ENCODE measurements at regions of chr2 and their contacts with region 1.

Region 1: DNA sequence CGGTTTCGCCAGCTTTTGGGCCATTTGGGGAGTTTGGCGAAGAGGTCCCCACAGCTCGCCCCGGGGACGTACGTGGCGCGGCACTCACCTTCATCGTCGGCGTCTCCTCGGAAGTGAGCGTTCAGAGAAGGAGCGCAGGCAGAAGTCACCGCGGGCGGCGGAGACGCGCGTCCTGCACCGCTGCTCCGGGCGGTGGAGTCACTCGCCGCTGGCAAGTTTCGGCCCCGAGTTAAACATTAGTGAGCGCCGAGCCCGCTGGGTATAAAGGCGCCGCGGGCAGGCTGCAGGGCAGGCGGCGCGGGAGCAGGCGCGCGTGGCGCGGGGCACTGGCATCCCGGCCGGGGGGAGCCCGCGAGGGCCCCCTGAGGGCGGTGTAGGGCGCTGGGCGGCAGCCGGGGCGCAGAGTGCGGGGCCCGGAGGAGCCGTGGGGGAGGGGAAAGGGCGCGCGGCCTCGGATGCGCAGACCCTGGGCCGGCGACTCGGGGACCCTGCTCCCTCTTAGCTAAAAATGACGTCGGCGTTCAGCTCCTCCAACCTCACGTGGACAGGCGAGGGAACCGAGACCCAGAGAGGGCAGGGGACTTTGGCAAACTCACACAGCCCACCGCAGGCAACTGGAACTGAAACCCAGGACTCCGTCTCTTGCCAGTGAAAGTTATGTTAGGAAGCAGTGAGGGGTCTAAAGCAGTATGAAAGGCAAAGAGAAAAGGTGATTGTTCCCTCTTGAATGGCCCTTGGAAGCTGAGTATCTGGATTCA is at the start of gene DPP4:
- DNase-seq: no peak
- ATAC-seq: peak; percentile 90
- H3K4me3 ChIP-seq: peak within 1 kb of the TSS; percentile 91
- H3K27ac ChIP-seq: peak within 1 kb of the TSS; percentile 28
- H3K4me1 ChIP-seq: peaks cover 6% of the 10 kb centered on the region; the same call in 1 of the 2 replicates
- H3K27me3 ChIP-seq: no peaks in the 10 kb centered on the region
- CTCF ChIP-seq: 0 out of 6 replicates have a peak, but pooled peaks of 1 of the 3 experiments have one; percentile 4
- EP300 ChIP-seq: peak in 1 of 2 experiments; percentile 14; a peak in 1 of 4 replicates
- POLR2A ChIP-seq: peak; percentile 75
- RAD21 ChIP-seq: no peak
- polyA plus RNA-seq, gene DPP4: 4.1 to 4.8 TPM

Region 2: DNA sequence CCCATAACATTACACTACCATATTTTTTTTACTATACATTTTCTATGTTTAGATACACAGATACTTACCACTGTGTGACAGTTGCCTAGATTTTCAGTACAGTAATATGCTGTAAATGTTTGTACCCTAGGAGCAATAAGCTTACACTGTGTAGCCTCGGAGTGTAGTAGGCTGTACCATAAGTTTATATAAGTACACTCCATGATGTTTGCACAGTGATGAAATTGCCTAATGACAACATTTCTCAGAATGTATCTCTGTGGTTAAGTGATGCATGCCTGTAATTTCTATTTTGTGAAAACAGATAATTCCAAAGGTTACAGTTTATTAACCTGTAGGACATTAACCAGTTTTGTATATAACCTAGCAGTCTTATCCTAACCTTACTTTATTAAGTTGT is 1452.3 kb before region 1 on chr2:
- CTCF ChIA-PET with region 1: no interaction called
- POLR2A ChIA-PET with region 1: no interaction called
- RAD21 ChIA-PET with region 1: no interaction called
- SMC1A ChIA-PET with region 1: no interaction called
- in situ Hi-C with region 1: no loop called
- intact Hi-C with region 1: no loop called
- DNase-seq: no peak
- ATAC-seq: no peak
- H3K4me3 ChIP-seq: no peak overlapping the region
- H3K27ac ChIP-seq: no peak overlapping the region
- H3K4me1 ChIP-seq: no peaks in the 10 kb centered on the region
- H3K27me3 ChIP-seq: no peaks in the 10 kb centered on the region
- CTCF ChIP-seq: no peak
- EP300 ChIP-seq: no peak
- POLR2A ChIP-seq: no peak
- RAD21 ChIP-seq: no peak

Region 3: GRCh38 chr2:161830964-161831363 is 243.1 kb before region 1 on chr2:
- CTCF ChIA-PET with region 1: no interaction called
- POLR2A ChIA-PET with region 1: no interaction called
- RAD21 ChIA-PET with region 1: no interaction called
- SMC1A ChIA-PET with region 1: no interaction called
- in situ Hi-C with region 1: no loop called
- intact Hi-C with region 1: no loop called
- DNase-seq: no peak
- ATAC-seq: no peak
- H3K4me3 ChIP-seq: no peak overlapping the region
- H3K27ac ChIP-seq: no peak overlapping the region
- H3K4me1 ChIP-seq: no peaks in the 10 kb centered on the region
- H3K27me3 ChIP-seq: no peaks in the 10 kb centered on the region
- CTCF ChIP-seq: no peak
- EP300 ChIP-seq: no peak
- POLR2A ChIP-seq: no peak
- RAD21 ChIP-seq: no peak

Region 4: DNA sequence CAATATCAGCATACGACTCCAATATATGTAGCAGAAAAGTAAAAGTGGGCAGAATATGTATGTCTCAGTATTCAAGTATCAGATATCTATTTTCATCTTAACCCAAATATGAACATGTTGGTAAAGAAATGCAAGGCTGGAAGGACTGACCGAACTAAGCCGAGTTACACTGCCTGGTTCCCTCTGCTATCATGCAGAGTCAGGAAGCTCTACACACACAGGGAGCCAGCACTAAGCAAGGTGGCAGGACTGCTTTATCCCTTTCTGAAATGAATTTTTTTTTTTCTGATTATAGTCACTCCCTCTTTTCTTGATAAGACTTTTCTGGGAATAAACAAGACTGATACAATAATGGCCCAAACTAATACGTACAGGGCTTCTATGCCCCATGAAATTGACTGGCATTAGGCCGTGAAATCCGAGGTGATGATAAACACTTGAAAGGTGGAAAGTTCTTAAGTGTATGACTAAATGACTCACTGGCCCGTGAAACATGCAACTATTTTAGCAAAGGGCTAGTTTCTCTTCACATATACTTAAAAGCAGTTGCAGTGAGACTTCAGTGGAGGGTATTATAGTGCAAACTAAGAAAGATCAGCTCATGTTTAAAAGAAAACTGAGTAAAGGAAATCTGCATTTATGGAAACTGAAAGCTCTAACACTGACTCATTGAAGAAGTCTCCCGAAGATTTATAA is 14.9 kb before region 1 on chr2:
- CTCF ChIA-PET with region 1: interaction called, 26 read pairs
- POLR2A ChIA-PET with region 1: interaction called, 98 read pairs
- RAD21 ChIA-PET with region 1: interaction called, 46 read pairs
- SMC1A ChIA-PET with region 1: interaction called, 152 read pairs
- in situ Hi-C with region 1: no loop called
- intact Hi-C with region 1: loop called (anchors 2 kb)
- DNase-seq: peak; percentile 84
- ATAC-seq: peak; percentile 82
- H3K4me3 ChIP-seq: peak overlapping the region; percentile 8; the same call in 1 of the 2 replicates
- H3K27ac ChIP-seq: peak overlapping the region; percentile 78
- H3K4me1 ChIP-seq: peaks cover 57% of the 10 kb centered on the region
- H3K27me3 ChIP-seq: no peaks in the 10 kb centered on the region
- CTCF ChIP-seq: no peak
- EP300 ChIP-seq: peak; percentile 37 to 79; a peak in 2 of 4 replicates
- POLR2A ChIP-seq: no peak
- RAD21 ChIP-seq: no peak

Region 5: GRCh38 chr2:162118559-162119031 is 44.5 kb after region 1 on chr2:
- CTCF ChIA-PET with region 1: interaction called, 5 read pairs
- POLR2A ChIA-PET with region 1: no interaction called
- RAD21 ChIA-PET with region 1: interaction called, 4 read pairs
- SMC1A ChIA-PET with region 1: interaction called, 4 read pairs
- in situ Hi-C with region 1: no loop called
- intact Hi-C with region 1: loop called (anchors 2 kb)
- DNase-seq: no peak
- ATAC-seq: no peak
- H3K4me3 ChIP-seq: no peak overlapping the region
- H3K27ac ChIP-seq: no peak overlapping the region
- H3K4me1 ChIP-seq: no peaks in the 10 kb centered on the region
- H3K27me3 ChIP-seq: no peaks in the 10 kb centered on the region
- CTCF ChIP-seq: no peak
- EP300 ChIP-seq: no peak
- POLR2A ChIP-seq: no peak
- RAD21 ChIP-seq: no peak

Region 6: DNA sequence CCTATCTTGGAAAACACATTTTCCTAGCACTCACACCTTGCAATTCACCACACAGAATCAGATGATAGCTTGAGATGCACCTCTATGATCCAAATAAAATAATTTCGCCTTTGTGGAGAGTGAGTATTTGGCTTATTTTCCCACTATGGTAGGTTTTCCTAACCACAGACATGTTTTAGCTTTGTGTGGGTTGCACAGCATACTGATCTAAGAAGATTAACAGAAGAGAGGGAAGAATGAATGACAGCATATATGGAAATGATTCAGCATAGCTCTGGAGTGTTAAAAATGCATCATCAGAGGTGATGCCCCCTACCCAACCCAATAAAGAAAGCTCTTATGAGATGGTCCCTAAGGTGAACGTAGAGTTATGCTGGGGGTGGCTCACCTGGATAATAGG is 342.4 kb after region 1 on chr2:
- CTCF ChIA-PET with region 1: no interaction called
- POLR2A ChIA-PET with region 1: no interaction called
- RAD21 ChIA-PET with region 1: no interaction called
- SMC1A ChIA-PET with region 1: no interaction called
- in situ Hi-C with region 1: no loop called
- intact Hi-C with region 1: no loop called
- DNase-seq: no peak
- ATAC-seq: no peak
- H3K4me3 ChIP-seq: no peak overlapping the region
- H3K27ac ChIP-seq: no peak overlapping the region
- H3K4me1 ChIP-seq: no peaks in the 10 kb centered on the region
- H3K27me3 ChIP-seq: no peaks in the 10 kb centered on the region
- CTCF ChIP-seq: no peak
- EP300 ChIP-seq: no peak
- POLR2A ChIP-seq: no peak
- RAD21 ChIP-seq: no peak